K562 (cell line): ENCODE measurements at regions of chr1 and their contacts with region 1.

Region 1: GRCh38 chr1:24930204-24931145 is at the start of gene RUNX3:
- DNase-seq: peak in 3 of 4 experiments; percentile 46 to 77 (median 76)
- ATAC-seq: no peak
- H3K4me3 ChIP-seq: no peak within 1 kb of the TSS
- H3K27ac ChIP-seq: no peak within 1 kb of the TSS
- H3K4me1 ChIP-seq: peaks cover 0 to 34% of the 10 kb centered on the region in 2 experiments; a peak in 2 of 5 replicates
- H3K27me3 ChIP-seq: peaks cover 72 to 94% of the 10 kb centered on the region in 2 experiments
- CTCF ChIP-seq: no peak
- EP300 ChIP-seq: no peak
- POLR2A ChIP-seq: no peak
- RAD21 ChIP-seq: no peak
- polyA plus RNA-seq, gene RUNX3: 0.01 to 0.04 TPM

Region 2: DNA sequence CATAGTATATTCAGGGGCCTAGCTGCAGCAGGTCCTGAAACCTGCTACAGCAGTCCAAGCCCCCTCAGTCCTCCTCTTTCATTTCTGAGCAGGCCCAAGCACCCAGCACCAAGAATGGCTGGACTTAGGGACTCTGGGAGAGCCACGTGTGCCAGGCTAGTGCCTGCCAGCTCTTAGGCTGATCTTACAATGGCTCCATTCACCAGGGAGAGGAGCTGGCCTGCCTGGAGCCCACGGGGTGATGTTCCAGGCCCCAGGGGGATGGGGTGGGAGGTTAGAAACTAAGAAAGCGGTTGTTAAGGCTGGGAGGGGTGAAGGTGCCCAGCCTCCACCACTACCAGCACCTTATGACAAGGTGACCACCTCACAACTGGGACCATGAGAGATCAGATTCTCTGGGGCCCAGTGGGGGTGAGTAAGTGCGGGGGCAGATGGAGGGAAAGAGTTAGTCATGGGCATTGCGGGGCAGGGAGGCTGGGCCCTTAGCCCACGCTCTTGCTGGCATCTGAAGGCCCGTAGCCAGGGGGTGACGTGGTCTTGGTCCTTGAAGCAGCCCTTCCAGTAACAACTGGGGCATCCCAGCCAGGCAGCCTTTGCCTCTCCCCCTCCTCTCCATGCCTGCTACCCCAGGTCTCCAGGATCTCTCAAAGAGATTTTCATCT is 215.5 kb before region 1 on chr1:
- CTCF ChIA-PET with region 1: no interaction called
- POLR2A ChIA-PET with region 1: no interaction called
- in situ Hi-C with region 1: no loop called
- intact Hi-C with region 1: no loop called
- DNase-seq: peak in 2 of 4 experiments; percentile 6 to 7
- ATAC-seq: no peak
- H3K4me3 ChIP-seq: no peak overlapping the region
- H3K27ac ChIP-seq: no peak overlapping the region
- H3K4me1 ChIP-seq: peaks cover 1 to 2% of the 10 kb centered on the region in 2 experiments; a peak in 1 of 5 replicates
- H3K27me3 ChIP-seq: no peaks in the 10 kb centered on the region
- CTCF ChIP-seq: no peak
- EP300 ChIP-seq: no peak
- POLR2A ChIP-seq: no peak
- RAD21 ChIP-seq: no peak

Region 3: GRCh38 chr1:24805534-24806301 is 124.8 kb before region 1 on chr1:
- CTCF ChIA-PET with region 1: no interaction called
- POLR2A ChIA-PET with region 1: no interaction called
- in situ Hi-C with region 1: no loop called
- intact Hi-C with region 1: no loop called
- DNase-seq: no peak
- ATAC-seq: no peak
- H3K4me3 ChIP-seq: no peak overlapping the region
- H3K27ac ChIP-seq: no peak overlapping the region
- H3K4me1 ChIP-seq: peaks cover 0 to 11% of the 10 kb centered on the region in 2 experiments; a peak in 2 of 5 replicates
- H3K27me3 ChIP-seq: no peaks in the 10 kb centered on the region
- CTCF ChIP-seq: no peak
- EP300 ChIP-seq: no peak
- POLR2A ChIP-seq: no peak
- RAD21 ChIP-seq: no peak

Region 4: GRCh38 chr1:24964811-24965570 is 34.5 kb after region 1 on chr1:
- CTCF ChIA-PET with region 1: no interaction called
- POLR2A ChIA-PET with region 1: no interaction called
- in situ Hi-C with region 1: no loop called
- intact Hi-C with region 1: no loop called
- DNase-seq: peak in 1 of 4 experiments; percentile 11
- ATAC-seq: peak; percentile 23; the same call in 2 of the 3 replicates
- H3K4me3 ChIP-seq: no peak overlapping the region
- H3K27ac ChIP-seq: no peak overlapping the region
- H3K4me1 ChIP-seq: peaks cover under 1 to 19% of the 10 kb centered on the region in 2 experiments; a peak in 3 of 5 replicates
- H3K27me3 ChIP-seq: peaks cover 20 to 52% of the 10 kb centered on the region in 2 experiments
- CTCF ChIP-seq: no peak
- EP300 ChIP-seq: no peak
- POLR2A ChIP-seq: no peak
- RAD21 ChIP-seq: no peak

Region 5: DNA sequence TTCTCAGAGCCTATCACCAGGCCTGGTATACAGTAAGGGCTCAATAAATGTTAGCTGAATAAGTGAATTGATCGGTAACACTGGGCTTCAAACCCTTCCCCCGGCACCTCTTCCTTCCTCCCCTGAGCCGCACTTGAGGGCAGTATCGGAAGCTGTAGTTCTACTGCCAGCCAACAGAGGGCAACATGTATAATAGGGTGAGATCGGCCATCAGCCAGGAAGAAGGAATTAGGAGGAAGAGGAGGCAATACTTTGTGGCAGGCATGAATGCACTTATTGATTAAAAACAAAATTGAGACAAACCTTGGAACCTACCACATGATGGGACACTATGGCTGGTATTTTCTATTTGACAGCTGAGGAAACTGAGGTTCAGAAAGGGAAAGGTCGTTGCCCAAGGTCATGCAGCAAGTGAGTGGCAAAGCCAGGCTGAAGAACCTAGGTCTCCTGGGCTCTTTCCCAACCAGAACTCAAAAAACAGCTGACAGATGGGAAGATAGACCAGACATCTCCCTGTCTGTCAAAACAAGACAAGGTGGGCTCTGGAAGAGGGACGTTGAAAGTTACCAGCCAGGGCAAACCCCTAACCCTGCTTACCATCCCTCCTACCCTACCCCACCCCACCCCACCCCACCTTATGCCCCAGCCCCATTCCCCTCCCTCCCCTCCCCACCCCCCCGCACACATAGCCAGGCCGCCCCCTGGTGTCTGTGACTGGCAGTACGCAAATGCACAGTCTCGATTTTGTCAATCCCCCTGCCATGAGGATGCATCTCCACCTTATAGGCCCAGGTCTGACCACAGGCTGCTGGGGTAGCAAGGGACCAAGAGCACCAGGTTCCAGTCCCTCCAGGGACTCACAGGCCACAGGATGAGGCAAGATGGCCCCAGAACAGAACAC is 106.9 kb after region 1 on chr1:
- CTCF ChIA-PET with region 1: interaction called, 20 read pairs
- POLR2A ChIA-PET with region 1: interaction called, 3 read pairs
- in situ Hi-C with region 1: no loop called
- intact Hi-C with region 1: loop called (anchors 5 kb)
- DNase-seq: peak; percentile 66 to 82 (median 80)
- ATAC-seq: peak; percentile 85
- H3K4me3 ChIP-seq: no peak overlapping the region
- H3K27ac ChIP-seq: no peak overlapping the region
- H3K4me1 ChIP-seq: peaks cover 0 to 7% of the 10 kb centered on the region in 2 experiments; a peak in 2 of 5 replicates
- H3K27me3 ChIP-seq: peaks cover 3 to 58% of the 10 kb centered on the region in 2 experiments; a peak in 4 of 5 replicates
- CTCF ChIP-seq: peak; percentile 86 to 92 (median 87)
- EP300 ChIP-seq: no peak
- POLR2A ChIP-seq: no peak
- RAD21 ChIP-seq: peak; percentile 51 to 76

Region 6: DNA sequence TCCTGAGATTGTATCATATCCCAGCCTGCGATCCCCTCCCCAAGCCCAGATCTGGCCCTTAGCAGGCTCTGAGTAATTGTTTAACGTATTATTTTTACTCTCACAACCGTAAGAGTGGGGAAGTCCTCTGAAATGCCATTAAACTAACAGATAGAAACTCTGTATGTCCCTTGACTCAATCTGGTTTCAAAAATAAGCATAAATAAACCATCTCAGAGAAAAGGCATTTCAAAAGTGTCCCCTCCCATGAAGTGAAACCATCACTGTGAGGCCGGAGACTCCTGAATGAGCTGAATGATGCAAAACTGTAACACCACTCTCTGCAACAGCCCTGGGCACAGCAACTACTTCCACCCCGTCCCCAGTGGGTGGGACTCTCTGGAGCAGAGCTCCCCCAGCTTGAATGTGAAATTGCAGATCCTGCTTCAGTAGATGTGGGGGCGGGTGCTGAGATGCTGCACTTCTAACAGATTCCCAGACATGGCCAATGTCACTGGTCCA is 197.7 kb after region 1 on chr1:
- CTCF ChIA-PET with region 1: no interaction called
- POLR2A ChIA-PET with region 1: no interaction called
- in situ Hi-C with region 1: no loop called
- intact Hi-C with region 1: no loop called
- DNase-seq: no peak
- ATAC-seq: peak; percentile 38; the same call in 2 of the 3 replicates
- H3K4me3 ChIP-seq: no peak overlapping the region
- H3K27ac ChIP-seq: no peak overlapping the region
- H3K4me1 ChIP-seq: no peaks in the 10 kb centered on the region
- H3K27me3 ChIP-seq: peaks cover 28 to 55% of the 10 kb centered on the region in 2 experiments
- CTCF ChIP-seq: no peak
- EP300 ChIP-seq: no peak
- POLR2A ChIP-seq: no peak
- RAD21 ChIP-seq: no peak